Common myeloid progenitor, CD34-positive (primary cell): ENCODE measurements at regions of chr9 and their contacts with region 1.

Region 1: GRCh38 chr9:105414947-105415661 is 32.7 kb upstream of the FSD1L start:
- DNase-seq: peak; percentile 65 to 80 (median 68)
- H3K4me3 ChIP-seq: no peak overlapping the region
- H3K27ac ChIP-seq: no peak overlapping the region
- H3K4me1 ChIP-seq: peaks cover 0 to 3% (median 1%) of the 10 kb centered on the region in 4 experiments
- H3K27me3 ChIP-seq: no peaks in the 10 kb centered on the region

Region 2: DNA sequence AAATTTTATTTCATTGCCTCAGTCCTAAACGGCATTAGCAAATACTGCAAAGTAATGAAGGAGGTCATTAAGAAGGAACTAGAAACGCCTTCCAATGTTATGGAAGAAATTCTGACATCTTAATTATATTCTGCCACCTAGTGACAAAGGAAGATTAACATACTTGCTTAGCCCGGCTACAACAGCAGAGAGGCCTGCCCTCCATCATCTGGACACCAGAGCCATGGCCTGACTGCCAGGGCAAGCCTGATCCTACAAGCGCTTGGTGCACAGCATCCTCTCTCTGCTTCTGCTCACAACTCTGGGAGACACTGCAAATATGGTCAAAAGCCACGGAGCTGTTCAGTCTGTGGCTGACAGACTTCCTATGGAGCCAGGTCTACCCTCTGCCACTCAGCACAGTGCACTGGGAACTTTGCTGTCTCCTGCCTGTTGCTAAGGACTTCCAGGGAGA is 257.9 kb before region 1 on chr9:
- CTCF ChIA-PET with region 1: interaction called, 110 read pairs
- POLR2A ChIA-PET with region 1: no interaction called
- DNase-seq: peak; percentile 63 to 74 (median 72)
- H3K4me3 ChIP-seq: no peak overlapping the region
- H3K27ac ChIP-seq: no peak overlapping the region
- H3K4me1 ChIP-seq: peaks cover 4 to 11% (median 8%) of the 10 kb centered on the region in 4 experiments
- H3K27me3 ChIP-seq: no peaks in the 10 kb centered on the region